ENCODE measurements at regions of chr2 and their contacts with region 1.

Region 1: DNA sequence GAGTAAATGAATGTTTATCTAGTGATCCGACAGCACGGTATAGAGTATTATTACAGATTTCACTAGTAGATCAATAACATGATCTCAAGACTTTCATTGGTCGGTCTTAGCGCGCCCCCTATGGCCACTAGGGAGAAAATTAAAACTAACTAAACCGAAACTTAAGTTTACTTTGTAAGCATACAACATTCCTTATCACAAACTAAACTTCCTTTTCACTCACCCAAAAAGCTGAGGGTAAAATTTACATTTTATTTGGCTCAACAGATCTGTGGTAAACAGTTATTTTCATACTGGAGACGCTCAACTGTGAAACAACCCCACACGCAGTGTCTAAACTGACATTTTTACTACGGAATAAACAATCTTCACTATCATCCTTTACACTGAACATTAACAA is 215.6 kb upstream of the MAP2 start:
- DNase-seq: peak; percentile 4
- H3K4me3 ChIP-seq: peak overlapping the region in 1 of 2 donors; percentile 9
- H3K27ac ChIP-seq: no peak overlapping the region
- H3K4me1 ChIP-seq: no peaks in the 10 kb centered on the region
- H3K27me3 ChIP-seq: no peaks in the 10 kb centered on the region
- CTCF ChIP-seq: peak in 3 of 4 experiments; percentile 45 to 61 (median 46)
- POLR2A ChIP-seq: no peak

Region 2: GRCh38 chr2:208407667-208408066 is 800.5 kb before region 1 on chr2:
- intact Hi-C with region 1: loop called (anchors 10 kb)
- DNase-seq: no peak
- H3K4me3 ChIP-seq: no peak overlapping the region
- H3K27ac ChIP-seq: no peak overlapping the region
- H3K4me1 ChIP-seq: peaks cover 4% of the 10 kb centered on the region
- H3K27me3 ChIP-seq: no peaks in the 10 kb centered on the region
- CTCF ChIP-seq: peak in 1 of 4 experiments; percentile 33
- POLR2A ChIP-seq: no peak

Region 3: GRCh38 chr2:208466151-208466919 is 741.9 kb before region 1 on chr2:
- intact Hi-C with region 1: loop called (anchors 10 kb)
- DNase-seq: no peak
- H3K4me3 ChIP-seq: no peak overlapping the region
- H3K27ac ChIP-seq: no peak overlapping the region
- H3K4me1 ChIP-seq: no peaks in the 10 kb centered on the region
- H3K27me3 ChIP-seq: no peaks in the 10 kb centered on the region
- CTCF ChIP-seq: peak in 3 of 4 experiments; percentile 26 to 49 (median 44)
- POLR2A ChIP-seq: no peak

Region 4: GRCh38 chr2:208820014-208820688 is 388.1 kb before region 1 on chr2:
- intact Hi-C with region 1: loop called (anchors 5 kb)
- DNase-seq: no peak
- H3K4me3 ChIP-seq: no peak overlapping the region
- H3K27ac ChIP-seq: no peak overlapping the region
- H3K4me1 ChIP-seq: no peaks in the 10 kb centered on the region
- H3K27me3 ChIP-seq: no peaks in the 10 kb centered on the region
- CTCF ChIP-seq: peak in 1 of 4 experiments; percentile 15
- POLR2A ChIP-seq: no peak

Measured in prostate gland (tissue), 2 donors.